ENCODE measurements at regions of chr17 and their contacts with region 1.

Region 1: DNA sequence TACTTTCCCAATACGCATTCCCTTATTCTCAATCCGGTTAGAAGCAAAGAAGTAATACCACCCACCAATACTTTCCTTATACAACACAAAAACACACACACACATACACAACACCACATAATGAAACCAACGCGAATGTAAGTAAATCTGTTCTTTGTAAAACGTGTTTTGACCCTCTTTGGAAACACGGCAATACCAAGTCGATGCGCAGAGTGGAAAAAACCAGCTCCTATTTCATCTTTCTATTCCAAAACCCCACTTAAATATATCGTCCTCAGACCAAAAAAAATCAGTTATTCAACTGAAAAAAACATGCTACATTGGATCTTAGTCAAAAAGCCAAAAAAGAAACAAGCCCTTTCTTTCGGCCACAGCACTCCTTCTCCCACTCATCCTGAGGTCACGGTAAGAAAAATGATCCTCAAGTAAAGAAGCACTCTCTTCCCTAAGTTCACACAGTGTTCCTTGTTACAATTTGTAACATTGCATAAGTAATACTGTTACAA is 31.0 kb upstream of the ARL4D start:
- DNase-seq: peak; percentile 51
- H3K4me3 ChIP-seq: peak overlapping the region; percentile 38
- H3K27me3 ChIP-seq: no peaks in the 10 kb centered on the region
- CTCF ChIP-seq: no peak

Region 2: GRCh38 chr17:43388359-43389045 is 20.7 kb after region 1 on chr17:
- CTCF ChIA-PET with region 1: interaction called, 22 read pairs
- POLR2A ChIA-PET with region 1: interaction called, 33 read pairs
- DNase-seq: peak; percentile 72
- H3K4me3 ChIP-seq: peak overlapping the region; percentile 61
- H3K27me3 ChIP-seq: no peaks in the 10 kb centered on the region
- CTCF ChIP-seq: no peak